Spleen (tissue), 13 donors: ENCODE measurements at regions of chr22 and their contacts with region 1.

Region 1: DNA sequence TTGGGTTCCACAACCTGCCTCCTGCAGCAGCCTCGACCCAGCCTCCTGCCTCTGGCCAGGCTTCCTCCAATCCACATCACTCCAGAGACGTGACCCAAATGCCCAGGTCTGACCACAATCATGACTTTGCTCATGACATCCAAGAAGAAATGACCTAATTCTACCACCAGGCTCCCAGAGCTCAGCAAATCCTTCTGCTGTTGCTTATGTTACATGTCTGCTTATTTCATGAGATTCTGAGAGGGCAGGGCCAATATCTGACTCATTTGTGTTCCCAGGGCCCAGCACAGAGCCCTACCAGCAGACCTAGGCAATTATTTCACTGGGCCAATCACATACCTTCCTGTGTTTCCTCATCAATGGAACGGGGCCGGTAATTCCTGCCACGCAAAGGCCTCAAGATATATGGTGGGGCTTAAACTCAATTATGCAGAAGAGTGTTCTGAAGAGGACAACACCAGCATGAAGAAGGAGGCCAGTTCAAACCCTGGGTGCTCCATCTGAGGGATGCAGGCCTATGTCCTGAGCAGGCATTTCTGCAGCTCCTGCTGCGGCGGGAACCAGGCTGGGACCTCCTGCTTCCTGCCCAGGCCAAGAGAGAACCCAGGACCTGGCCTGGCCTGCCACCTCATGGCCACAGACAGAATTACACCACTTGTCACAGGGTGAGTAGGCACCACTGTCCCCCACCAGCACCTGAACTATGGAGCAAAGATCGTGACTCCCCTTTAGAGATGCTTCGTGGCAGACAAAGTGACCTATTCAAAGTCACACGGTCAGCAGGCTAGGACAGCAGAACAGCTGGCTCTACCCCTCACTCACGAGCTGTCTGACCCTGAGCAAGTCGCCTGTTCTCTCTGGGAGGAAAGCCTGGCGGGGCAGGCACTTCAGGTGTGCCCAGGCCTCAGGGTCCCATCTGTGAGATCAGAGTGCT is 5.9 kb downstream of the CENPM start:
- DNase-seq: peak; percentile 95
- H3K4me3 ChIP-seq: peak overlapping the region in 1 of 8 donors; percentile 42
- H3K27ac ChIP-seq: peak overlapping the region; percentile 78 to 95 (median 89)
- H3K4me1 ChIP-seq: peaks cover 19 to 68% (median 42%) of the 10 kb centered on the region in 6 donors
- H3K27me3 ChIP-seq: peaks cover 0 to 6% (median 0%) of the 10 kb centered on the region in 7 donors
- CTCF ChIP-seq: peak; percentile 92 to 99 (median 95)
- POLR2A ChIP-seq: peak in 1 of 3 donors; percentile 7

Region 2: GRCh38 chr22:41697126-41697775 is 243.8 kb before region 1 on chr22:
- intact Hi-C with region 1: loop called (anchors 5 kb)
- DNase-seq: peak; percentile 97
- H3K4me3 ChIP-seq: peak overlapping the region in 4 of 8 donors; percentile 9 to 46 (median 16)
- H3K27ac ChIP-seq: peak overlapping the region in 7 of 8 donors; percentile 40 to 74 (median 57)
- H3K4me1 ChIP-seq: peaks cover 15 to 28% (median 22%) of the 10 kb centered on the region in 6 donors
- H3K27me3 ChIP-seq: no peaks in the 10 kb centered on the region
- CTCF ChIP-seq: peak; percentile 89 to 99 (median 97)
- POLR2A ChIP-seq: no peak

Region 3: DNA sequence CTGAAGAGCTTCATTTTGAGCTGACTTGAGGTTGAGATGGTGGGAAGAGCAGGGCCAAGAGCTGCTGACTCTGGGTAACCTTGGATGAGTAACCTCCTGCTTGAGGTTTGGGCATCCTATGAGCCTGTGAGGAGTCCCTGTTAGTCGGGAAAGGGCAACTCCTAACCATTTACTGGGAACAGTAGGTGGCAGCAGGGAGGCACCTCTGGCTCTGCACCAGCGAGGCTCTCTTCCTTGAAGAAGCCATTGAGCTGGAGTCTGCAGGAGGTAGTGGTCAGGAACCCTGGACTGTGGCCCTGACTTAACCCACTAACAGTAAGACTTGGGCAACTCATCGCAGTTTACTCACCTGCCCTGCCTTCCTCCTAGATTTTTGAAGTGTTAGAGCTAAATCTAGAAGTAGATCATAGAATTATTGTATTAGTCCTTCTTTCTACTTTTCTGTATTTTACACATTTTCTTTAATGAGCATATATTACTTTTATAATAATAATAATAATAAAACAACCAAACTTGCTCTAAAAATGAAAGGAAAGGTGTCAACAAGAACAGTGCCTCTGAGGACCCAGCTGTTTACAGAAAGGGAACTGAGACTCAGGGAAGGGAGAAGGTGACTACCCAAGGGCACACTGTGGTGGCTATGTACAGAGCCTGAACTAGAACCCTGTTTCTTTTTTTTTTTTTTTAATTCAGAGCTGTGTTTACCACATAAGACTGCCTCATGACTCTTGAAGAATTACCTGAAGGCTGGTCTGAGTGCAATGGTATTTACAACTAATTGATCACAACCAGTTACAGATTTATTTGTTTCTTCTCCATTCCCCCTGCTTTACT is 194.3 kb before region 1 on chr22:
- intact Hi-C with region 1: loop called (anchors 5 kb)
- DNase-seq: peak; percentile 81
- H3K4me3 ChIP-seq: no peak overlapping the region
- H3K27ac ChIP-seq: peak overlapping the region in 6 of 8 donors; percentile 4 to 68 (median 34)
- H3K4me1 ChIP-seq: peaks cover 0 to 23% (median 13%) of the 10 kb centered on the region in 6 donors
- H3K27me3 ChIP-seq: no peaks in the 10 kb centered on the region
- CTCF ChIP-seq: peak in 10 of 11 experiments; percentile 27 to 75 (median 67)
- POLR2A ChIP-seq: no peak

Region 4: DNA sequence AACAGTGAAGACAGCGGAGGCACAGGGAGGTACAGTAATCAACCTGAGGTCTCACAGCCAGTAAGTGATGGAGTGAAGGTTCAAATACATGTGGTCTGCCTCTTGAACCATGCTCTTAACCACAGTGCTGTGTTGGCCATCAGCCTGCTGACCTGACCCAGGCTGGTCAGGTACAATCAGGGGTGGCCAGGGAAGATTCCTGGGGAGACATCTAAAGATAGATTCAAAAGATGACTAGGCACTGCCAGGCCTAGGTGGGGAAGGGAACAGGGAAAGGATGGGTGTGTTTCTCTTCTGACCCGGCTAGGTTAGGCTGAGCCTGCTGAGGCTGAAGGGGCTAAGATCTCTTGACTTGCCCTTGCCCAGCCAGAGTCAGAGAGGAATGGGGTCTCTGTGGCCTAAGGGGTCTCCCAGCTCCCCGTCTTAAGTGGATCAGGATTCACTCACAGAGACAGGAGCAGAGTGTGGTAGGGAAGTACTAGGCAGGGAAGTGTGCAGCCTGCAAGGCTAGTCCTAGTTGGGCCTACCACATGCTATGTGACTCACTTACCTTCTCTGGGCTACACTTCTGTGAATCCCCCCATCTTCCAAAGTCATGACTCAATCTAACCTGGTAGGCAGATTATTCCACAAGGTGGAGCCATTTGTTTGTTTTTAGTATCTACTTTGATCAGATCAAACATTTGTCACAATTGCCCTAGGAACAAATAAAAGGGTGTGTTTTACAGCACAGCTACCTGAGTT is 118.6 kb before region 1 on chr22:
- intact Hi-C with region 1: loop called (anchors 5 kb)
- DNase-seq: no peak
- H3K4me3 ChIP-seq: no peak overlapping the region
- H3K27ac ChIP-seq: peak overlapping the region in 1 of 8 donors; percentile 1
- H3K4me1 ChIP-seq: peaks cover 10 to 51% (median 30%) of the 10 kb centered on the region in 6 donors
- H3K27me3 ChIP-seq: no peaks in the 10 kb centered on the region
- CTCF ChIP-seq: peak; percentile 41 to 79 (median 68)
- POLR2A ChIP-seq: no peak